WTC11 (cell line): ENCODE measurements at regions of chr17 and their contacts with region 1.

Region 1: GRCh38 chr17:16521070-16521727 is 29.2 kb upstream of the LRRC75A start:
- DNase-seq: peak; percentile 64
- ATAC-seq: peak; percentile 87
- H3K4me3 Mint-ChIP-seq: no peak overlapping the region
- H3K27ac Mint-ChIP-seq: no peak overlapping the region
- H3K4me1 Mint-ChIP-seq: peaks cover 14% of the 10 kb centered on the region
- H3K27me3 Mint-ChIP-seq: peaks cover 20% of the 10 kb centered on the region
- CTCF ChIP-seq: peak; percentile 68

Region 2: DNA sequence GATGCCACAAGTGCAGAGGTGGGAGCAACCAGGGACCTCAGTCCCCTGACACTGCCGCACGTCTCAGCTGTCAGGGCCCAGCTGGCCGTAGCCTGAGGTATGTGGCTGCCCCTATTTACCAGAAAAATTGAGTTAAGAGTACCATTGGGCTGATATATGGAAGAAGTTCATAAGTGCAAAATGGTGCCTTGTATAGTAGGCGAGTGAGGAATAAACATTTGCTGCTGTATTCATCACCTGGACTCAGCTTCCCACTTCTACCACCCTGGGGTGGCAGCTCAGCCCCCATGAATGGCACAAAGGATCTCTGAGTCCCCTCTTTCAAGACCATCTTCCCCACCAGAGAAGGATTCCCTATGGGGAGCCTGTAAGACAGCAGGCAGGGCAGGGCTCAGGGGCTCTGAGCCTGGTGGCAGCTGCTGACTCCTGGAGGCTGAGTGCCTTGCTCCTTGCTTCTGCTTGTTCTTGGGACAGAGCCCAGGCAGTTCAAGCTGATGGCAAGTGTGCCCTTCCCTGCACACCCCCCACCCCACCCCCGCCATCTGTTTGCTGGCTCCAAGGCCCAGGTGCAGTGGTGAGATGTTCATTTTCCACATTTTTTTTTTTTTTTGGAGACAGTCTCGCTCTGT is 76.8 kb before region 1 on chr17:
- CTCF ChIA-PET with region 1: interaction called, 204 read pairs
- POLR2A ChIA-PET with region 1: interaction called, 3 read pairs
- DNase-seq: no peak
- ATAC-seq: peak; percentile 7
- H3K4me3 Mint-ChIP-seq: no peak overlapping the region
- H3K27ac Mint-ChIP-seq: peak overlapping the region; percentile 45
- H3K4me1 Mint-ChIP-seq: peaks cover 53% of the 10 kb centered on the region
- H3K27me3 Mint-ChIP-seq: no peaks in the 10 kb centered on the region
- CTCF ChIP-seq: no peak

Region 3: DNA sequence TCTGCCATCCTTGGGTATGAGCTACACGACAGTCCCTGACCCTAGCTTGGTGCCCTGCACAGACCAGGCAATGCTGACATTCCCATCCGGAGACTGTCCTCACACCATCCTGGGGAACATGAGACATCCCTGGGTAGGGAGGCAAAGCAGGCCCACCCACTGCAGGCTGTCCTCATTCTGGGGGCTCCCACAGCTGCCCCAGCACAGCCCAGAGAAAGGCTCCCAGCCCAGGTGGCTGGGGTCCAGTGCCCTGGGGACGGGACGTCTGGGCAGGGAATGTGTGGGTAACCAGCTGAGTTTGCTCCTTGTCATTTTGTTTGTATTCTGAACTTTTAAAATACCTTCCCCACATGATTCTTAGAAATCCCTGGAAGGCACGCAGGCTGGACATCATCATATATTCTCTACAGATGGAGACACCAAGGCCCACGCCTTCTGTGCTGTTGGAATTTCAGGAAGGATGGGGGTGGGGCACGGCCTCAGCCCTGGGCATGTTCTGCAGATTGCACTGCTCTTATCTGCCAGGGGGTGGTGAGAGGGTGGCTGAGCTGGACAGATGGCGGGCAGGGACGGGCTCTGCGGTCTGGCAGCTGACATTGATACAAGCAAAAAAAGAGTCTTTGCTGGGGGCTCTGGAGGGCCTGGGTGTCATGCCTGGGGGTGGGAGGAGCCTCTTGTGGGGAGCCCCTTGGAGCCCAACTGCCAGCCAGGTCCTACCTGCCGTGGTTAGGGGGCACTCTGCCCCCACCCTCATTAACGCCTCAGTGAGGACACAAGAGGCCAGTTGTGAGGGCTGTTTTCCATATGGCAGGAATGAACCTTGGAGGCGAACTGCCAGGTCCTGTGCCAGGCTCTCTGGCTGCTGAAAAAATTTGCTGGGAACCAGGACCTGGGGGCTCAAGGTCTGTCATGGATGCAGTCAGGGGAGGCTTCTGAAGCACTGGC is 57.6 kb before region 1 on chr17:
- CTCF ChIA-PET with region 1: interaction called, 56 read pairs
- POLR2A ChIA-PET with region 1: no interaction called
- DNase-seq: no peak
- ATAC-seq: peak; percentile 59
- H3K4me3 Mint-ChIP-seq: no peak overlapping the region
- H3K27ac Mint-ChIP-seq: no peak overlapping the region
- H3K4me1 Mint-ChIP-seq: peaks cover 53% of the 10 kb centered on the region
- H3K27me3 Mint-ChIP-seq: no peaks in the 10 kb centered on the region; the same call in 1 of the 2 replicates
- CTCF ChIP-seq: no peak

Region 4: DNA sequence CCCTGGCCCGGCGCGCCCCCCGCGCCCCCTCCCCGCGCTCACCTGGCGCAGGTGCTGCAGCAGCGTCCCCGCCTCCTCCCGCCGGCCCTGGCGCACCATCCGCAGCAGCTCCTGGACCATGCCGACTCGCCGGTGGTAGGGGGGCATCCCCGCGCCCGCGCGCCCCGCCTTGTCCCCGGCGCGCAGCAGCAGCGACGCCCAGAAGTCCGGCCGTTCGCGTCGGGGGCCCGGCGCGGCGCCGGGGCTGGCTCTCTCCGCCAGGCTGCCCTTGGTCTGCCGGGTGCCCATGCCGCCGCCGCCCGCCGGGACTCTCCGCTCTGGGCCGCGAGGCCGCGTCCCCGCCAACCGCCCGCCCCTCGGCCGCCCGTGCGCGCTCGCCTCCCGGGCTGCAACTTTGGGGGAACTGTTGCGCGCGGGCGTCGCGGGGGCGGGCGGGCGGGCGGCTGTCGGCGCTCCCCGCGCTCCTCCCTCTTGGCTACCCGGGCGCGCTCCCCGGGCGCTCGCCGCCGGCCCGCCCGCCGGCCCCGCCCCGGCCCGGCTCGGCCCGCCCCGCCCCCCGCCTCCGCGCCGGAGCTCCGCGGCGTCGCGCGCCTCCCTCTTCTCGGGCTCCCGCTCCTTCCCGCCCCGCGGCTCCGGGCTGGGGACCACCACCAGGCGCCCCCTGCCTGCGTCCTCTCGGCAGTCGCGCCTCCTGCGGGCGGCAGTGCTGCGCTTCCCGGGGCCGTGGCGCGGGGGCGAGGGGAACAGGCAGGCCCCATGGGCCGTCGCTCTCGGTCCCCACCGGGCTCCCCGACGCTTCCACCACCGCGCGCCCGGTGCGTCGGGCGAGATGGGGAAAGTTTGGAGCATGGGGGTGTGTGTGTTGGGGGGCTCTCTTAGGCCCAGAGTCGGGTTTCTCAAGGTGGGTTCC is 29.2 kb before region 1 on chr17 and contains the start of gene LRRC75A:
- CTCF ChIA-PET with region 1: interaction called, 14 read pairs
- POLR2A ChIA-PET with region 1: no interaction called
- DNase-seq: peak; percentile 75
- ATAC-seq: peak; percentile 64
- H3K4me3 Mint-ChIP-seq: peak within 1 kb of the TSS; percentile 72
- H3K27ac Mint-ChIP-seq: no peak within 1 kb of the TSS; the same call in 1 of the 2 replicates
- H3K4me1 Mint-ChIP-seq: peaks cover 85% of the 10 kb centered on the region
- H3K27me3 Mint-ChIP-seq: peaks cover 33% of the 10 kb centered on the region
- CTCF ChIP-seq: no peak
- total RNA-seq, gene LRRC75A: 13.7 to 22.9 TPM (median 14.7 TPM) in 3 replicates

Region 5: DNA sequence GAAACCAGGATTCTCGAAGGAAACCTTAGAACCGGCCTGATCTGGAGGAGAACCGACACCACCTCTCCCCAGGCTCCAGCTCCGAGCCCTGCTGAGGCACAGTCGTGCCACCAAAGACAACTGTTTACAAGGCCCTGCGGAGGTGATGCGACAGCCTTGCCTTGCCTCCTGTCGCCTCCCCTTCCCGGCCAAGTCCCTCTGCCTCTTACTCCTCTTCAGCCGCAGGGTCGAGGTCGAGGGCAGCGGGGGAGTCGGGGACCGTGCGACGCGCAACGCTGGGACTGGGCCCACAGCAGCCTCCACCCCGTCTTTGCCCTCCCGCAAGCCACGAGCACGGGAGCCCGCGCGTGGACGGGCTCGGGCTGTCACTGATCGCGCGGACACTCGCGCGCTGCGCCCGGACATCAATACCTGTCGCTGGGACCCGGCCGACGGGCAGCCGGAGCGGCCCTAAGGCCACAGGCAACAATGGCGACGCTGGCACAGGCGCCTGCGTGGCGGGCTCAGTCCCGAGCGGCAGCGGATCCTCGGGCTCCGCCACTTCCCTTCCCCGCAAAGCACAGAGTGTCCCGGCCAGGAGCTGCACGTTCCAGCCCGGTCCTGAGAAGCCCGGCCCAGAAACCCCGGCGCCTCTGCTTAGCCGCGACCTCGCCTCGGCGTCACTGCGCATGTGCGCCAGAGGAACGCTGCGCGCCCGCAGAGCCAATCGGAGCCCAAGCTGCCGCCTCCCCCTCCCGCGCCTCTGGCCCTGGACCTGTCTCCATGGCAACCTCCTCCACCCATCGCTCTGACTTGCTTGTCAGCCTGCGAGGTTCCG is 47.5 kb after region 1 on chr17 and contains the start of gene ZNF287:
- CTCF ChIA-PET with region 1: no interaction called
- POLR2A ChIA-PET with region 1: no interaction called
- DNase-seq: peak; percentile 92
- ATAC-seq: peak; percentile 95
- H3K4me3 Mint-ChIP-seq: peak within 1 kb of the TSS; percentile 66
- H3K27ac Mint-ChIP-seq: no peak within 1 kb of the TSS
- H3K4me1 Mint-ChIP-seq: peaks cover 7% of the 10 kb centered on the region
- H3K27me3 Mint-ChIP-seq: peaks cover 69% of the 10 kb centered on the region
- CTCF ChIP-seq: no peak
- total RNA-seq, gene ZNF287: 5.4 to 8.9 TPM (median 8.1 TPM) in 3 replicates